Panc1 (cell line): ENCODE measurements at regions of chr15 and their contacts with region 1.

Region 1: GRCh38 chr15:44999105-44999504 is 23.9 kb upstream of the SORD start:
- DNase-seq: no peak
- ATAC-seq: no peak
- H3K4me3 ChIP-seq: no peak overlapping the region
- H3K27ac ChIP-seq: no peak overlapping the region
- H3K4me1 ChIP-seq: no peaks in the 10 kb centered on the region
- H3K27me3 ChIP-seq: no peaks in the 10 kb centered on the region
- CTCF ChIP-seq: no peak

Region 2: GRCh38 chr15:44570361-44570760 is 428.7 kb before region 1 on chr15:
- CTCF ChIA-PET with region 1: no interaction called
- POLR2A ChIA-PET with region 1: no interaction called
- in situ Hi-C with region 1: no loop called
- intact Hi-C with region 1: no loop called
- DNase-seq: no peak
- ATAC-seq: no peak
- H3K4me3 ChIP-seq: no peak overlapping the region
- H3K27ac ChIP-seq: no peak overlapping the region
- H3K4me1 ChIP-seq: no peaks in the 10 kb centered on the region
- H3K27me3 ChIP-seq: no peaks in the 10 kb centered on the region
- CTCF ChIP-seq: no peak

Region 3: GRCh38 chr15:45083223-45083622 is 84.1 kb after region 1 on chr15:
- CTCF ChIA-PET with region 1: no interaction called
- POLR2A ChIA-PET with region 1: interaction called, 10 read pairs
- in situ Hi-C with region 1: no loop called
- intact Hi-C with region 1: no loop called
- DNase-seq: no peak
- ATAC-seq: no peak
- H3K4me3 ChIP-seq: no peak overlapping the region
- H3K27ac ChIP-seq: no peak overlapping the region
- H3K4me1 ChIP-seq: no peaks in the 10 kb centered on the region
- H3K27me3 ChIP-seq: peaks cover 9% of the 10 kb centered on the region
- CTCF ChIP-seq: no peak

Region 4: GRCh38 chr15:45253330-45253729 is 254.2 kb after region 1 on chr15:
- CTCF ChIA-PET with region 1: no interaction called
- POLR2A ChIA-PET with region 1: no interaction called
- in situ Hi-C with region 1: no loop called
- intact Hi-C with region 1: no loop called
- DNase-seq: no peak
- ATAC-seq: no peak
- H3K4me3 ChIP-seq: no peak overlapping the region
- H3K27ac ChIP-seq: peak overlapping the region; percentile 48; the same call in 1 of the 2 replicates
- H3K4me1 ChIP-seq: no peaks in the 10 kb centered on the region
- H3K27me3 ChIP-seq: no peaks in the 10 kb centered on the region
- CTCF ChIP-seq: peak; percentile 35; the same call in 1 of the 2 replicates

Region 5: GRCh38 chr15:45268135-45268534 is 269.0 kb after region 1 on chr15:
- CTCF ChIA-PET with region 1: no interaction called
- POLR2A ChIA-PET with region 1: no interaction called
- in situ Hi-C with region 1: no loop called
- intact Hi-C with region 1: no loop called
- DNase-seq: no peak
- ATAC-seq: no peak; the same call in 1 of the 2 replicates
- H3K4me3 ChIP-seq: no peak overlapping the region
- H3K27ac ChIP-seq: no peak overlapping the region
- H3K4me1 ChIP-seq: no peaks in the 10 kb centered on the region
- H3K27me3 ChIP-seq: no peaks in the 10 kb centered on the region
- CTCF ChIP-seq: peak; percentile 61